ENCODE measurements at regions of chr1 and their contacts with region 1.

Region 1: DNA sequence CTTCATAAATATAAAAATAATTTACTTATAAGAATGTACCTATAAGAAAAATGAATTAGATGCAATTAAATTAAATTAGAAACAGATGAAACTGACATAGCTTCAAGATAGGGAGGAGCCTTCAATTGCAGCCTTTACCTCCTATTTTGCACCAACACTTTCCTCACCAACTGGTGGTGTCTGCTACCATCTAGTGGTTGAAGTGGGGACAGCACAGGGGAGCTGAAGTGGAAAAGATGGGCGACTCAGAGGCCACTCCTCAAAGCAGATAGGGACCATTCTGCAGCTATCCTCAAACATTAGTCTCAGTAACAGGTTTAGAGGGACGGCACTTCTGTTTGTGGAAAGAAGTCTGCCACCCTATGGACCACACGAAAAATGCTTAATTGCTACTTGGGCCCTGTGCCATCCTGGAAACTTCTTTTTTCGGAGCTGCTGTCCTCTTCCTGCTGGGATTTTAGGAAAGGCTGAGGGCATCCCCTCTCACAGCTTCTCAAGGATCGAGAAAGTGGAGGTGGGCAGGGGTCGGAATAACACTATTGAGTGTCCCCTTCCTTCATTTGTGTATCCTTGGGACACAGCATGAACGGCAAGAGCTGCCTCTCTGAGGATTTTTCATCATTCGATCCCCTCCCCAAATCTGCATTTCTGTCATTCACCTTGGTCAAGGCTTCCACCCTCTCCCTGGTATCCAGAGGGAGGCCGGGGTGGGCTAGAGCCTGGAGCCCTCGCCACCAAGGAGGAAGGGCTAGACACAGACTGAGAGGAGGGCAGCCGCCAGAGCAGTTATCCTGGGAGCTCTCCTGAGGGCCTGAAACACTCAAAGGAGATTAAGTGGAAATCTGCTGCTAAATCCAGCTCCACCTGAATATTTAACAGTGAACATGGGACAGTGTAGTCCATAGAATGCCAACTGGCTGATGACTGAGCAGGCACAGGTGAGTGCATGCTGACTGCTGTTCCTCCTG is 9.6 kb downstream of the PROK1 start:
- DNase-seq: peak; percentile 74 to 93 (median 86)
- H3K4me3 ChIP-seq: no peak overlapping the region
- H3K27ac ChIP-seq: no peak overlapping the region
- H3K4me1 ChIP-seq: no peaks in the 10 kb centered on the region
- H3K27me3 ChIP-seq: no peaks in the 10 kb centered on the region
- CTCF ChIP-seq: peak; percentile 97

Region 2: GRCh38 chr1:110203021-110203661 is 257.4 kb before region 1 on chr1:
- intact Hi-C with region 1: loop called (anchors 5 kb)
- DNase-seq: peak in 4 of 5 donors; percentile 20 to 84 (median 78)
- H3K4me3 ChIP-seq: no peak overlapping the region
- H3K27ac ChIP-seq: no peak overlapping the region
- H3K4me1 ChIP-seq: peaks cover 0 to 5% (median 0%) of the 10 kb centered on the region in 3 donors
- H3K27me3 ChIP-seq: no peaks in the 10 kb centered on the region
- CTCF ChIP-seq: peak; percentile 95

Region 3: DNA sequence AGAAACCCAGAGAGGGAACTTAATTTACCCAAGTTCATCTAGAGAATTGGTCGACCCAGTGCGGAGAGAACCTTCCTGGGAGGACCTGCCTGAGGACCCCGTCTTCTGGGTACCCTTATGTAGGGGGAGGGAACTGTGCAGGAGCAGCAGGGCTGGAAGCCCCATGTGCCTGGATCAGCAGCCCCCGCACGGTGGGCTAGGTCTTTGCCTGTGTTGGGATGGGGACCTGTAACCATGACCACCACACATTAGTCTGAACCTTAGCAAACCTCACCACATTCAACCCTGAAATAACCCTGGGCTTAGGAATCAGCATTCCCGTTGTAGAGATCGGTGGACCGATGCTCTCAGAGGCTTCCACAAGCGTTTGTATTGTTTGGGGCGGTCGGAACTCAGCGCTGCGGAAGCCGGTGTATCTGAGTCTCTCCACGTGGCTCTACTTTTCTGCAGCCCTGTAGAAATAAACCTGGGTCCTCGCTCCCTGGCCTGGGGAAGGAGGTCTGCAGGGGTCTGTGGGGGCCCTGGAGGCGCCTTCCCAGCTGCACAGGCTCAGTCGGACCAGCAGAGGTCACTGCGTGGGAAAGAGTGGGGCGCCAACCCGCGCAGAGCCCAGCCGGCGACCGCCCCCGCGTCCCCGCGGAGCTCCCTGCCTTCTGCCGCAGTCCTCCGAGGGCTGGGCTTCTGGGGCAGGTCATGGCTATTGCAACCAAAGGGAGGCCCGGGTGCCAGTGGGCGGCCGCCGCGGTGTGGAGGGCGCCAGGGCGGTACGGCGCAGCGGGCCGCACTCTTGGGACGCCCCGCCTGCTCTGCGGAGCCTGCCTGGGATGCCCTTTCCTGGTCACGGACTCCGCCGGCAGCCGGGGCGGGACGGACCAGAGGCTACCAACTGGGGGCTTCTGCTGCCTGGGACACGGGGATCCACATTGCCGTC is 94.6 kb after region 1 on chr1:
- intact Hi-C with region 1: no loop called
- DNase-seq: peak; percentile 48 to 85 (median 66)
- H3K4me3 ChIP-seq: no peak overlapping the region
- H3K27ac ChIP-seq: no peak overlapping the region
- H3K4me1 ChIP-seq: peaks cover 0 to 6% (median 0%) of the 10 kb centered on the region in 3 donors
- H3K27me3 ChIP-seq: peaks cover 2% of the 10 kb centered on the region
- CTCF ChIP-seq: peak; percentile 61